ENCODE measurements at regions of chr7 and their contacts with region 1.

Region 1: DNA sequence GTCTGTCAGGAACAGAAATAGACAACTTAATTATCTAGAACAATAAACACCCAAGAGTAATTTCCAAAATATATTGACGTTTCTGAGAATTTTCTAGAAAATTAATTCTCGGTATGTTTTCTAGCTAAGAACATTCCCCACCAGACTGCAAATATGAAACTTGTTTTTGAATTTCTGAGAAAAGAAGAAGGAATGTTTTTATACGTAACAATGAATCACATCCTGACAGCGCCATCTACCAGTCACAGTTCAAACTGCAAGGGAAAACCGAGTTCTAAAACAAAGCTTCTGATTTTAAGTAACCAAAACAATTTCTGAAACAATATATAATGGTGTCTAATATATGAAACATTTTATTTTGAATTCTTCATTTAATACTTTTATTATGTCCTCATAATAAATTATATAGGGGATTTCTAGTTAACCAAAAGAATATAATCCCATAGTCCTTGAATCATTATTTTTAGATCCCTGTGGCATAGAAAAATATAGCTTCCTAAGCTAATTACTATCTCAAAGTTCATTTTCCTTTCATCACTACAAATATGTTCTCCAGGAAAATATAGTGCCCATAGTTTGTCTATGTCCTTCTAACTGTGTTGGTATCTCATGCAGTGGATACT is 34.5 kb upstream of the MEOX2 start:
- H3K4me3 ChIP-seq: no peak overlapping the region
- H3K27ac ChIP-seq: no peak overlapping the region
- H3K4me1 ChIP-seq: no peaks in the 10 kb centered on the region
- CTCF ChIP-seq: no peak

Region 2: GRCh38 chr7:15305002-15305600 is 415.9 kb before region 1 on chr7:
- CTCF ChIA-PET with region 1: interaction called, 17 read pairs
- POLR2A ChIA-PET with region 1: no interaction called
- H3K4me3 ChIP-seq: no peak overlapping the region
- H3K27ac ChIP-seq: no peak overlapping the region
- H3K4me1 ChIP-seq: no peaks in the 10 kb centered on the region
- CTCF ChIP-seq: no peak

Region 3: DNA sequence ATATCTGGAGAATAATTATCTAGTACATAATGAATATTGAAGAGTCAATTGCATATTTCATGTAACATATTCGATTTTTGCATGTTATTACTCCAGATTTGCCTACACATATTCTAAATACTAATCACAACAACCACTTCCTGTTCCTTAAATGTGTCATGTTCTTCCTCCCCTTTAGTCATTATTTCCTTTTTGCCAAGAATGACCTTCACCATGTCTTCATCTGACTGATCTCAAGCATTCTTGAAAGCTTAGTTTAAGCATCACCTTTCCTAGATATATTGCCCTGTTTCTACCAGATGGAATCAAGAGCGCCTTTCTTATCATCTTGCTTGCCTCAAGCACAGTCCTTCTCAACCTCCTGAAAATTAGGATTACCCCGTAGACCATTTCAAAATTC is 11.0 kb before region 1 on chr7:
- CTCF ChIA-PET with region 1: interaction called, 23 read pairs
- POLR2A ChIA-PET with region 1: no interaction called
- H3K4me3 ChIP-seq: no peak overlapping the region
- H3K27ac ChIP-seq: no peak overlapping the region
- H3K4me1 ChIP-seq: no peaks in the 10 kb centered on the region
- CTCF ChIP-seq: no peak